Activated CD8-positive, alpha-beta memory T cell treated with anti-CD3 and anti-CD28 coated beads, Interleukin-2, amount 10 ng/mL, durations not matched to agents 7 days and 5 days (primary cell): ENCODE measurements at regions of chr1 and their contacts with region 1.

Region 1: GRCh38 chr1:113072757-113073478 is at the start of gene LRIG2:
- DNase-seq: peak; percentile 99
- ATAC-seq: peak; percentile 98
- H3K4me3 Mint-ChIP-seq: peak within 1 kb of the TSS; percentile 100
- H3K27ac Mint-ChIP-seq: peak within 1 kb of the TSS; percentile 92
- H3K4me1 Mint-ChIP-seq: peaks cover 20% of the 10 kb centered on the region
- H3K27me3 Mint-ChIP-seq: no peaks in the 10 kb centered on the region
- total RNA-seq, gene LRIG2: 10.2 to 13.6 TPM

Region 2: GRCh38 chr1:112803906-112804762 is 268.8 kb before region 1 on chr1:
- CTCF ChIA-PET with region 1: interaction called, 13 read pairs
- DNase-seq: peak; percentile 71
- ATAC-seq: peak; percentile 89
- H3K4me3 Mint-ChIP-seq: no peak overlapping the region
- H3K27ac Mint-ChIP-seq: no peak overlapping the region
- H3K4me1 Mint-ChIP-seq: no peaks in the 10 kb centered on the region
- H3K27me3 Mint-ChIP-seq: peaks cover 11% of the 10 kb centered on the region

Region 3: GRCh38 chr1:112882271-112882744 is 190.6 kb before region 1 on chr1:
- CTCF ChIA-PET with region 1: interaction called, 34 read pairs
- DNase-seq: no peak
- ATAC-seq: no peak
- H3K4me3 Mint-ChIP-seq: no peak overlapping the region
- H3K27ac Mint-ChIP-seq: no peak overlapping the region
- H3K4me1 Mint-ChIP-seq: peaks cover 2% of the 10 kb centered on the region
- H3K27me3 Mint-ChIP-seq: peaks cover 28% of the 10 kb centered on the region

Region 4: DNA sequence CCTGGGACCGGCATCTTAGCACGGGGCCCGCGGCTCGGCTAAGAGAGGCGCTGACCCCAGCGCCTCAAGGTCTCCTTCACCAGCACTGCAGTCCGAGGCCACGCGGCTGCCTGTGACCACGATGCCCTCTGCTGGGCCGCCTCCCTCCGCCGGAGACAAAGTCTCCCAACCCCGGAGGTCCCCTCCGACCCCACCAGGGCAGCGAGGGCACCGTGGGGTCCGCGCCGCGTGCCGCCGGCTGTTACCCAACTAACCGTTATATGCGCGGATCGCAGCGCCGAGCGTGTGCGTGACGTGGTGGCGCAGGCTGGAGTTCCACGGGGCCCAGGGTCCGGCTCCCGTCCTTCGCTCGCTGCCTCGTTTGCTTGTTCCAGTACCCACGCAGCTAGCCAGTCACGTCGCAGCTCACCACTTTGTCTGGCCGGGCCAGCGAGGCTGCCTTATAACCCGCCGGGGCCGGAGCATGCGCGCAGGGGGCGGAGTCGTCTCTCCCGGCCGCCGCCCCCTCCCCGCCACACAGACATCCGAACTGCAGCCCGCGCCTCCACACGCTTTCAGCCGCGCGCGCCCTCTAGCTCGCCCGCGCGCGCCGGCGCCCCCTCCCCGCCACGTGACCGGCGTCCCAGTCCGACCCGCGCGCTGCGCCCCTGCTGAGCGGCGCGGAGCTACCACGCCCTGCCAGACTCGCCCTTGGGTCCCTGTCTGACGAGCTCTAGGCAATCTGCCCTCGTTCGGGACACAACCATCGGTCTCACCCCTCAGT is 117.0 kb before region 1 on chr1 and contains the start of gene SLC16A1:
- CTCF ChIA-PET with region 1: interaction called, 17 read pairs
- DNase-seq: peak; percentile 92
- ATAC-seq: peak; percentile 76
- H3K4me3 Mint-ChIP-seq: peak within 1 kb of the TSS; percentile 99
- H3K27ac Mint-ChIP-seq: peak within 1 kb of the TSS; percentile 99
- H3K4me1 Mint-ChIP-seq: peaks cover 56% of the 10 kb centered on the region
- H3K27me3 Mint-ChIP-seq: no peaks in the 10 kb centered on the region
- total RNA-seq, gene SLC16A1: 47.6 to 57.3 TPM

Region 5: DNA sequence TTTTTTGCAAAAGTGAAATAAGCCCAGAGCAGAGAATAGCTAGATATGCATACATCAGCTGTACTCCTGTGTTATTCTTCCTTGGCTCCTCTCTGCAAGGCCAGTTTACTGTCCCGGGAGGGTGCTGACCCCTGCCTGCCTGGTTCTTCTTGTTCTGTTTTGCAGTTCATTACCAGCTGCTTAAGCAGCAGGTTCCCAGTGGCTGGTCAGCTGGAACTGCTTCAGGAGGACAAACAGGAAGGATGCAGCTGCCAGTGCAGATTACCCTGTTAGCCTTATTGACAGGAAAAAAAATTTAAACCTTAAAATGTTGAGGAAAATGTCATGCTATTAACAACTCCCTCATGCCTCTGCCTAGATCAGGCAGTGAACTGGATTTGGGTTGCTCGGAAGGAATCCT is 15.9 kb before region 1 on chr1:
- CTCF ChIA-PET with region 1: interaction called, 37 read pairs
- DNase-seq: no peak
- ATAC-seq: no peak
- H3K4me3 Mint-ChIP-seq: no peak overlapping the region
- H3K27ac Mint-ChIP-seq: no peak overlapping the region
- H3K4me1 Mint-ChIP-seq: peaks cover 11% of the 10 kb centered on the region
- H3K27me3 Mint-ChIP-seq: no peaks in the 10 kb centered on the region

Region 6: DNA sequence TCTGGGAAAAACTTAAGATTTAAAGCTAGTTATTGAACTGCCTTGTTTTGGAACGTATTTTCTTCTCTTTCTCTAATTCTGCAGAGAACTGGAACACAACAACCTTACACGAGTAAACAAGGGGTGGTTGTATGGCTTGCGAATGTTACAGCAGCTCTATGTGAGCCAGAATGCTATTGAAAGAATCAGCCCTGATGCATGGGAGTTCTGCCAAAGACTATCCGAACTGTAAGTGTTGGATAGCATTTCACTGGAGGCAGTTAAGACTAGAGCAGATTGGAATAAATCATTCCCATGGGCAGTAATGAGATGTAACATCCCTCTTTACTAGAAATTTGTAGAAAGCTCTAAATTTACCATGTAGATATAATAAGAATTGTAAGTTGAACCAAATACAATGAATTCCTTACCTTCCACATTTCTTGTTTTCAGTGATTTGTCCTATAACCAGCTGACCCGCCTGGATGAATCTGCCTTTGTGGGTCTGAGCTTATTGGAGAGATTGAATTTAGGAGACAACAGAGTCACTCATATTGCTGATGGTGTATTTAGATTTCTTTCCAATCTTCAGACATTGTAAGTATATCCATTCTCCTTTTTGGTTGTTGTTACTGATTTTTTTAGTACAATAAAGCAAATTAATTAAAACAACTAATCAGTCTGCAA is 23.0 kb after region 1 on chr1:
- CTCF ChIA-PET with region 1: interaction called, 18 read pairs
- DNase-seq: no peak
- ATAC-seq: no peak
- H3K4me3 Mint-ChIP-seq: no peak overlapping the region
- H3K27ac Mint-ChIP-seq: no peak overlapping the region
- H3K4me1 Mint-ChIP-seq: peaks cover 6% of the 10 kb centered on the region
- H3K27me3 Mint-ChIP-seq: no peaks in the 10 kb centered on the region

Region 7: GRCh38 chr1:113106910-113107309 is 34.0 kb after region 1 on chr1:
- CTCF ChIA-PET with region 1: no interaction called
- DNase-seq: no peak
- ATAC-seq: no peak
- H3K4me3 Mint-ChIP-seq: no peak overlapping the region
- H3K27ac Mint-ChIP-seq: no peak overlapping the region
- H3K4me1 Mint-ChIP-seq: no peaks in the 10 kb centered on the region
- H3K27me3 Mint-ChIP-seq: no peaks in the 10 kb centered on the region

Region 8: GRCh38 chr1:113479713-113480676 is 407.1 kb after region 1 on chr1:
- CTCF ChIA-PET with region 1: no interaction called
- DNase-seq: no peak
- ATAC-seq: no peak
- H3K4me3 Mint-ChIP-seq: no peak overlapping the region
- H3K27ac Mint-ChIP-seq: no peak overlapping the region
- H3K4me1 Mint-ChIP-seq: no peaks in the 10 kb centered on the region
- H3K27me3 Mint-ChIP-seq: no peaks in the 10 kb centered on the region